ENCODE measurements at regions of chrX and their contacts with region 1.

Region 1: DNA sequence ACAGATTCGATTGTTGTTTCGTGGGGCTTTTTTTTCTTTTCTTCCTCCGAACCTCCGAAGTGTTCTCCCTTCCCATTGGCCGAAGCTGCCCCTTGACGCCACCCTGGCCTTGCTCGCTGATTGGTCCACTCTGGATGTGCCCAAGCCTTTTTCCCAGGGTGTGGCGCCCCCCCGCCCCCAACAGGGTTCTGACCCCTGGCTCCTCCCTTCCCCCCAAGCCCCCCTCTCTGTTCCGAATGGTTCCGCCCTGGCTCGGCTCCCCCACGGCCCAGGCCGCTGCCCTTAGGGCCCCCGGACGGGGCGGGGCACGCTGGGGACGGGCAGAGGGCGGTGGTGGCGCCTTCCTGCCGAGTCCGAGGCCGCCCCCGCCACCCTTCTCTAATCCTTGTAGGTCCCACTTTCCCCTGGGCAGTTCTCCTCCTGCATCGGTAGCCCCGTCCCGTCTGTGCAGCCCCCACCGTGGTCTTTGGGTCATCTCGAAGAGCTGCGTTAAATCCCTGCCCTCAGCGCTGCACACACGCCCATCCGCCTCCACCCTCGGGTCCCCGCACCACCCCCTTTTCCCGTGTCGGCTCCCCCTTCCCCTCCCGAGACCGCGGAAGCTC is 25.5 kb downstream of the UTP14A start:
- DNase-seq: peak; percentile 86 to 94
- ATAC-seq: peak; percentile 74 to 80
- H3K4me3 ChIP-seq: peak overlapping the region; percentile 59 to 78 (median 66)
- H3K27ac ChIP-seq: peak overlapping the region; percentile 88 to 97 (median 92)
- H3K4me1 ChIP-seq: no peaks in the 10 kb centered on the region
- H3K27me3 ChIP-seq: no peaks in the 10 kb centered on the region
- CTCF ChIP-seq: no peak
- POLR2A ChIP-seq: peak; percentile 48 to 52

Region 2: GRCh38 chrX:129905787-129906580 is 25.5 kb before region 1 on chrX and contains the start of gene UTP14A:
- in situ Hi-C with region 1: no loop called
- intact Hi-C with region 1: loop called (anchors 1 kb)
- DNase-seq: peak; percentile 75 to 84
- ATAC-seq: peak; percentile 99
- H3K4me3 ChIP-seq: peak within 1 kb of the TSS; percentile 61 to 86 (median 81)
- H3K27ac ChIP-seq: peak within 1 kb of the TSS; percentile 82 to 86 (median 86)
- H3K4me1 ChIP-seq: peaks cover 0 to 7% of the 10 kb centered on the region in 2 donors
- H3K27me3 ChIP-seq: no peaks in the 10 kb centered on the region
- CTCF ChIP-seq: no peak
- POLR2A ChIP-seq: peak in 1 of 2 donors; percentile 37
- total RNA-seq, gene UTP14A: 10.0 to 13.9 (median 10.9) TPM

Region 3: GRCh38 chrX:129953881-129954280 is 22.4 kb after region 1 on chrX:
- in situ Hi-C with region 1: no loop called
- intact Hi-C with region 1: loop called (anchors 2 kb)
- DNase-seq: no peak
- ATAC-seq: no peak
- H3K4me3 ChIP-seq: no peak overlapping the region
- H3K27ac ChIP-seq: no peak overlapping the region
- H3K4me1 ChIP-seq: no peaks in the 10 kb centered on the region
- H3K27me3 ChIP-seq: no peaks in the 10 kb centered on the region
- CTCF ChIP-seq: no peak
- POLR2A ChIP-seq: no peak

Region 4: GRCh38 chrX:129982274-129983251 is 51.0 kb after region 1 on chrX and contains the start of gene BCORL1:
- in situ Hi-C with region 1: loop called in 1 of 4 experiments (anchors 5 kb)
- intact Hi-C with region 1: loop called (anchors 1 kb)
- DNase-seq: peak; percentile 84 to 87
- ATAC-seq: peak; percentile 80
- H3K4me3 ChIP-seq: peak within 1 kb of the TSS in 1 of 4 donors; percentile 65
- H3K27ac ChIP-seq: peak within 1 kb of the TSS in 3 of 4 donors; percentile 76 to 81 (median 78)
- H3K4me1 ChIP-seq: peaks cover 0 to 10% of the 10 kb centered on the region in 2 donors
- H3K27me3 ChIP-seq: no peaks in the 10 kb centered on the region
- CTCF ChIP-seq: no peak
- POLR2A ChIP-seq: peak; percentile 73 to 84
- total RNA-seq, gene BCORL1: 1.1 to 3.6 (median 2.4) TPM

Region 5: GRCh38 chrX:129996120-129996519 is 64.6 kb after region 1 on chrX:
- in situ Hi-C with region 1: no loop called
- intact Hi-C with region 1: no loop called
- DNase-seq: no peak
- ATAC-seq: no peak
- H3K4me3 ChIP-seq: no peak overlapping the region
- H3K27ac ChIP-seq: peak overlapping the region in 1 of 4 donors; percentile 9
- H3K4me1 ChIP-seq: no peaks in the 10 kb centered on the region
- H3K27me3 ChIP-seq: no peaks in the 10 kb centered on the region
- CTCF ChIP-seq: no peak
- POLR2A ChIP-seq: no peak

Region 6: DNA sequence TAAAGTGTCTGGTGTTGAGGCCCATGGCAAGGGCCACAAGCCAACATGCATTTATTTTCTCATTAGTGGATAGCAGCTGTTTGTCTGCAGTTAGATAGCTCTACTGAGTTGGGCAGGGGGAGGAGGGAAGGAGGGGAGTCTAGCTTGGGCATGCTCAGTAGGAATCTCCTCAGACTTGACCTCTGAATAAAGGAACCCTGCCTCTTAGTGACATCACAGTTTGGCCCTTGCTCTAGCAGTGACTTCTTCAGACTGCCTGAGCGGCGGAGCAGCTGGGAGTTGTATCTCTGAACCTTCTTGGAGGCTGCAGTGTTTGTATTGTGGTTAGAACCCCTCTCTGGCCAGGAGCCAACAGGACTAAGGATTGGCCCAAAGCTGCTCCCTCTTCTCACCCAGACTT is 108.3 kb after region 1 on chrX:
- in situ Hi-C with region 1: no loop called
- intact Hi-C with region 1: no loop called
- DNase-seq: no peak
- ATAC-seq: no peak
- H3K4me3 ChIP-seq: no peak overlapping the region
- H3K27ac ChIP-seq: no peak overlapping the region
- H3K4me1 ChIP-seq: no peaks in the 10 kb centered on the region
- H3K27me3 ChIP-seq: no peaks in the 10 kb centered on the region
- CTCF ChIP-seq: no peak
- POLR2A ChIP-seq: no peak

Region 7: DNA sequence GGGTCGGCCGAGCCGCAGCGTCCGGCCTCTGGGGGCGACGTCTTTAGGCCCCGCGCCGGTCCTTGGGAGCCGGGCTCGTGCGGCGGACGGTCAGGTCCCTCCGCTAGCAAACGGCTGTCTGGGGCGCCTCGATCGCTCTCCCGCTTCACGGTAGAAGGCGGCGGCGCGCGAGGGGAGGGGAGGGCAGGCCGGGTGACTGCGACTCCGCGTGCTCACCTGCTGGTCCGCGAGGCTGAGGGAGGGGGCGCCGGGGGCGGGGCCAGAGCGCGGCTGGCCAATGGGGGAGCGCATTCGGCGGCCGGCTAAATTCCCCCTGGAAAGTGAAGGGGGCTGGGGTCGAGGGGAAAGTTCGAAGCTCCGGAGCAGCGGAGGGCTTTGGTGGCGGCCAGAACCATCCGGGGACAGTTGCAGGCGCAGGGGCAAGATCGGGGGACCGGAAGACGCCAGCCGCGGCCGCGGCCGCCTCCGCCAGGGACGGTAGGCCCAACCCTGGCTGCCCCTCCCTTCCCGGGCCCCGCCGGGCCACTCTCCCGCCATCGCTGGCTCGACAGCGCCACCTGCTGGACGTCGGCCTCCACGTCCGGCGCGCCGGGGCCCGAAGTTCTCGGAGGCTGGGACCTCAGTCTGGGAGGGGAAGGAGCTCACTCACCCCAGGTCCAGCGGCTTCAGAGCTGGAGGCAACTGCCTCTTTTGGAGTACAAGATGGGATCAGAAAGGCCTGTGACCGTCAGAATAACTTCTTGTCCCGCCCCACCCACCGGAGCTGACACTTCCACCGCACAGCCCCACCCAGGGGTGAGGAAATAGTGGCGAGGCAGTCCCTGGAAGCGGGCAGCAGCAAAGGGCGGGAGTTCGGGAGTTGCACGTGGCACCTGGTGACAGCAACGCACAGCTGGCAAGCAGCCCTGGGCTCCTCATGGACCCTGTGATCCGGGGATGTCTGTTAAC is 128.9 kb after region 1 on chrX:
- in situ Hi-C with region 1: loop called (anchors 10 kb)
- intact Hi-C with region 1: loop called (anchors 1 kb)
- DNase-seq: peak; percentile 45 to 65
- ATAC-seq: peak; percentile 91 to 94
- H3K4me3 ChIP-seq: peak overlapping the region; percentile 56 to 70 (median 58)
- H3K27ac ChIP-seq: peak overlapping the region; percentile 64 to 76 (median 68)
- H3K4me1 ChIP-seq: peaks cover 0 to 6% of the 10 kb centered on the region in 2 donors
- H3K27me3 ChIP-seq: no peaks in the 10 kb centered on the region
- CTCF ChIP-seq: peak; percentile 80 to 92 (median 88)
- POLR2A ChIP-seq: no peak

Region 8: DNA sequence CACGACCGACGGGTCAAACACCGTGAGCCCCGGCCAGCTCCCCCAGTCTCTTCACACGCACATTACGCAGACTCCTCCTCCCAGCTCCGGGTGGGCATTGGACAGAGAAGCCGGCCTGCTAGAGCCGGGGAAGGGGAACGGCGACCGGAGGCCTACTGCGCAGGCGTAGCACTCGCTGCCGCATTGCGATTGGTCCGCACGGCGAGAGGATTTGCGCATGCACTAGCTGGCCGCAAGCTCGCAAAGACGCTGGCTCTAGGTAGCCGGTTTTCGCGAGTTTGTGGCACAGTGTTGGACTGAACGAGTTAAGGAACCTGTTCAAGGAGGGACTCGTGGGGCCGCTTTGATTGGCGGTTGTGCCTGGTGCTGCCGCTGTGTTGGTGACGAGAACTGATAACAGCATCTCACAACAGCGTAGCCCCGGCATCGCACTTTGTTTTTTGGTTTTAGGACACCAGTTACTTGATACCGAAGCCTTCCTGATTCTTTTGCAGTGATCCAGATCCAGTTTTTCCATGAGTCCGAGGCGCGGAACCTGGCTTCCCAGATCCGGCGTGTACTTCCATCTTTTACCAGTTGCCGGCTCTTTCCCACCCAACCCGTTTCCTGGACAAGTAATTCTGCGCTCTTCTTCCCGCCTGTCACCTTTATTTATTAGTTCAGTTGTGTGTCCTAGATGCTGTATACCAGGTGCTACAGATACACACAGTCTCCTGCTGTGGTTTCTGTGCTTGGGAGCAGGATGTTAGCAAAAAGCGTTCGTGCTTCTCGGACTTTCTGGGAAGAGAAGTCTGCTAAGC is 234.4 kb after region 1 on chrX and contains the start of gene AIFM1:
- in situ Hi-C with region 1: no loop called
- intact Hi-C with region 1: loop called (anchors 1 kb)
- DNase-seq: peak; percentile 89 to 93
- ATAC-seq: peak; percentile 92 to 98
- H3K4me3 ChIP-seq: peak within 1 kb of the TSS; percentile 62 to 81 (median 74)
- H3K27ac ChIP-seq: peak within 1 kb of the TSS; percentile 88 to 94 (median 90)
- H3K4me1 ChIP-seq: peaks cover 11 to 18% of the 10 kb centered on the region in 2 donors
- H3K27me3 ChIP-seq: no peaks in the 10 kb centered on the region
- CTCF ChIP-seq: no peak
- POLR2A ChIP-seq: peak; percentile 61 to 69
- total RNA-seq, gene AIFM1: 18.9 to 50.1 (median 30.0) TPM

Measured in gastrocnemius medialis (tissue), 4 donors.